K562 (cell line): ENCODE measurements at regions of chr5 and their contacts with region 1.

Region 1: GRCh38 chr5:99060306-99061261 is 131.8 kb upstream of the CHD1 start:
- DNase-seq: peak; percentile 65 to 81 (median 72)
- ATAC-seq: peak; percentile 68
- H3K4me3 ChIP-seq: no peak overlapping the region
- H3K27ac ChIP-seq: no peak overlapping the region
- H3K4me1 ChIP-seq: no peaks in the 10 kb centered on the region
- H3K27me3 ChIP-seq: no peaks in the 10 kb centered on the region
- CTCF ChIP-seq: peak; percentile 75 to 85 (median 83)
- EP300 ChIP-seq: no peak
- POLR2A ChIP-seq: no peak
- RAD21 ChIP-seq: peak; percentile 76 to 81

Region 2: GRCh38 chr5:98796197-98796972 is 264.2 kb before region 1 on chr5:
- CTCF ChIA-PET with region 1: no interaction called
- POLR2A ChIA-PET with region 1: no interaction called
- in situ Hi-C with region 1: no loop called
- intact Hi-C with region 1: loop called (anchors 5 kb)
- DNase-seq: peak; percentile 51 to 68 (median 54)
- ATAC-seq: peak; percentile 91
- H3K4me3 ChIP-seq: no peak overlapping the region
- H3K27ac ChIP-seq: no peak overlapping the region
- H3K4me1 ChIP-seq: 0 out of 5 replicates have a peak, but pooled peaks cover 0 to 3% of the 10 kb centered on the region in 2 experiments
- H3K27me3 ChIP-seq: peaks cover 0 to 6% of the 10 kb centered on the region in 2 experiments; a peak in 3 of 5 replicates
- CTCF ChIP-seq: peak; percentile 52 to 75 (median 65); a peak in 5 of 6 replicates
- EP300 ChIP-seq: no peak
- POLR2A ChIP-seq: no peak
- RAD21 ChIP-seq: peak; percentile 31 to 65; a peak in 3 of 4 replicates

Region 3: GRCh38 chr5:98827161-98827560 is 233.4 kb before region 1 on chr5:
- CTCF ChIA-PET with region 1: no interaction called
- POLR2A ChIA-PET with region 1: no interaction called
- in situ Hi-C with region 1: no loop called
- intact Hi-C with region 1: loop called (anchors 5 kb)
- DNase-seq: peak; percentile 29 to 47 (median 36)
- ATAC-seq: peak; percentile 85
- H3K4me3 ChIP-seq: no peak overlapping the region
- H3K27ac ChIP-seq: no peak overlapping the region
- H3K4me1 ChIP-seq: no peaks in the 10 kb centered on the region
- H3K27me3 ChIP-seq: no peaks in the 10 kb centered on the region
- CTCF ChIP-seq: peak; percentile 39 to 63 (median 52); a peak in 5 of 6 replicates
- EP300 ChIP-seq: no peak
- POLR2A ChIP-seq: no peak
- RAD21 ChIP-seq: peak; percentile 52 to 73

Region 4: DNA sequence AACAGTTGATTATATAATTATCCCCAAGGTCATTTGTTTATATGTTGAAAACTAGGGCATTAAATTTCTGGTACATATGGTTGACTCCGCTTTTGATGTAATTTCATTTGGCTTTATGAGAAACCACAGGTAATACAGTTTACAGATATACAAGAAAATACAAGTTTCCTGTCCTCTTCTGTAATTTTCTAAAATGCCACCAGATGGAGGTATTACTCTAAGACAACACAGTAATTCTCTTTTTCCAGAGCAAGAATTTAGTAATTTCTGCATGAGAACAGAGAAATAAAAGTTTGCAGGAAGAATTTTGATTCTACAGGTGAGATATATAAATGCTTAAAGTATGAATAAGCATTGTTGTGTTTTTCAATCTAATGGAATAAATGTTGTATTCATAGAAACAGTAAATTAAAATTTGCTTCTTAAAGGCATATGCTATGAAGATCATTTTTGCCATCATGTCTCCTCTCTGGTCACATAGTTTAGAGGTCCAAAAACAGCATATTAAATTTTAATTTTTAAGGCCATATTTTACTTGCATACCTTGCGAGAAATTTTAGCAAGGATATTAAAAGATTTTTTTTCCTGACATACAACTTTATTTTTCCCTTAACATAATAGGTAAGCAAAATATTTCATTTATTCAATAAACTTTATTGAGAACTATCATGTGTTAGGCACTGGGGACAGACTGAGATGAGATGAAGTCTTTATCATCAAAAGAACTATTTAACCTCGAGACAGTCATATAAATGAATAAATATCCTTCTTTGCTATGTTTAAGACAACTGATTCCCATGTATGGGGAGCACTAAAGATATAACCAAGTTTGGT is 154.5 kb before region 1 on chr5:
- CTCF ChIA-PET with region 1: interaction called, 24 read pairs
- POLR2A ChIA-PET with region 1: interaction called, 5 read pairs
- in situ Hi-C with region 1: no loop called
- intact Hi-C with region 1: loop called (anchors 1 kb)
- DNase-seq: peak in 3 of 4 experiments; percentile 11 to 56 (median 15)
- ATAC-seq: peak; percentile 75
- H3K4me3 ChIP-seq: no peak overlapping the region
- H3K27ac ChIP-seq: no peak overlapping the region
- H3K4me1 ChIP-seq: no peaks in the 10 kb centered on the region
- H3K27me3 ChIP-seq: no peaks in the 10 kb centered on the region
- CTCF ChIP-seq: peak in 2 of 3 experiments; percentile 43 to 75; a peak in 4 of 6 replicates
- EP300 ChIP-seq: no peak
- POLR2A ChIP-seq: no peak
- RAD21 ChIP-seq: peak; percentile 92 to 94

Region 5: DNA sequence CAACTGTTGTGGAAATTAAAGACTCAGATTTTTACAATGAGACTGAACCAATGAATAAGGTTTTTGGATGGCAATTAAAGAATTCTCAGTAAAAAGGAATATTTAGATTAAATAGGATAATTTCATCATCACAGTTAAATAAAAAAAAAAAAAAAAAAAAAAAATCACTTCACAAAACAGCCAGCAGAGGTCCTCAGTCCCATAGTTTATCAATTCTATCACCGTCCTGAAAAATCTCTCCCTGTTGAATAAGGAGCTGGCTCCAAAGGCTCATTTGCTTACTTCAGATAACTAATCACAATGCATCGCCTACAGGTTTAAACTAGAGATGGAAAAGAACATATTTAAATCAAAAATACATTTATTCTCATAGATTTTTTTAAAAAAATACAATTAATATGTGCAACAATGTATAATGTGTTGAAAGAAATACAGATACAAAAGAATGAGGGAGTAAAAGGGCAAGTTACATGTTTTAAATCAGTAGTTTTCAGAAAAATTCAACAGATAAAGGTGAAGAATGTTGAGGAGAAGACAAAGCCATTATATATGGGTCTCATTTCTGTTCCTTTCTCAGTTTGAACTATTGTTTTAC is 44.1 kb after region 1 on chr5:
- CTCF ChIA-PET with region 1: no interaction called
- POLR2A ChIA-PET with region 1: no interaction called
- in situ Hi-C with region 1: no loop called
- intact Hi-C with region 1: no loop called
- DNase-seq: peak; percentile 24 to 34 (median 27)
- ATAC-seq: peak; percentile 68; the same call in 2 of the 3 replicates
- H3K4me3 ChIP-seq: no peak overlapping the region
- H3K27ac ChIP-seq: no peak overlapping the region
- H3K4me1 ChIP-seq: no peaks in the 10 kb centered on the region
- H3K27me3 ChIP-seq: no peaks in the 10 kb centered on the region
- CTCF ChIP-seq: peak; percentile 38 to 73 (median 55); a peak in 5 of 6 replicates
- EP300 ChIP-seq: no peak
- POLR2A ChIP-seq: no peak
- RAD21 ChIP-seq: peak; percentile 56 to 69